Gastrocnemius medialis (tissue), 4 donors: ENCODE measurements at regions of chr15 and their contacts with region 1.

Region 1: GRCh38 chr15:85582131-85583079 is 202.0 kb downstream of the AKAP13 start:
- DNase-seq: peak; percentile 77 to 78
- ATAC-seq: peak; percentile 62 to 68
- H3K4me3 ChIP-seq: peak overlapping the region; percentile 51 to 63 (median 60)
- H3K27ac ChIP-seq: peak overlapping the region; percentile 88 to 96 (median 90)
- H3K4me1 ChIP-seq: peaks cover 58 to 71% of the 10 kb centered on the region in 2 donors
- H3K27me3 ChIP-seq: no peaks in the 10 kb centered on the region
- CTCF ChIP-seq: no peak
- POLR2A ChIP-seq: peak; percentile 88 to 89

Region 2: GRCh38 chr15:84833447-84834228 is 748.8 kb before region 1 on chr15:
- in situ Hi-C with region 1: no loop called
- intact Hi-C with region 1: loop called (anchors 10 kb)
- DNase-seq: peak in 1 of 2 donors; percentile 81
- ATAC-seq: peak; percentile 10 to 18
- H3K4me3 ChIP-seq: no peak overlapping the region
- H3K27ac ChIP-seq: peak overlapping the region; percentile 94 to 99 (median 96)
- H3K4me1 ChIP-seq: peaks cover 92 to 93% of the 10 kb centered on the region in 2 donors
- H3K27me3 ChIP-seq: no peaks in the 10 kb centered on the region
- CTCF ChIP-seq: no peak
- POLR2A ChIP-seq: peak in 1 of 2 donors; percentile 47

Region 3: GRCh38 chr15:85380217-85380811 is 202.1 kb before region 1 on chr15 and contains the start of gene AKAP13:
- in situ Hi-C with region 1: no loop called
- intact Hi-C with region 1: loop called (anchors 5 kb)
- DNase-seq: peak; percentile 96 to 98
- ATAC-seq: peak; percentile 93 to 95
- H3K4me3 ChIP-seq: peak within 1 kb of the TSS; percentile 74 to 94 (median 91)
- H3K27ac ChIP-seq: peak within 1 kb of the TSS; percentile 86 to 94 (median 92)
- H3K4me1 ChIP-seq: peaks cover 6 to 11% of the 10 kb centered on the region in 2 donors
- H3K27me3 ChIP-seq: peaks cover 0 to 2% (median 0%) of the 10 kb centered on the region in 3 donors
- CTCF ChIP-seq: no peak
- POLR2A ChIP-seq: peak; percentile 90 to 92
- total RNA-seq, gene AKAP13: 127 to 481 (median 172) TPM

Region 4: GRCh38 chr15:85707519-85708338 is 125.3 kb after region 1 on chr15:
- in situ Hi-C with region 1: loop called in 1 of 4 experiments (anchors 10 kb)
- intact Hi-C with region 1: no loop called
- DNase-seq: peak in 1 of 2 donors; percentile 56
- ATAC-seq: peak; percentile 76 to 84
- H3K4me3 ChIP-seq: peak overlapping the region; percentile 24 to 40 (median 29)
- H3K27ac ChIP-seq: peak overlapping the region; percentile 82 to 86 (median 84)
- H3K4me1 ChIP-seq: peaks cover 63% of the 10 kb centered on the region in 2 donors
- H3K27me3 ChIP-seq: no peaks in the 10 kb centered on the region
- CTCF ChIP-seq: peak in 1 of 5 experiments; percentile 9
- POLR2A ChIP-seq: peak in 1 of 2 donors; percentile 47

Region 5: DNA sequence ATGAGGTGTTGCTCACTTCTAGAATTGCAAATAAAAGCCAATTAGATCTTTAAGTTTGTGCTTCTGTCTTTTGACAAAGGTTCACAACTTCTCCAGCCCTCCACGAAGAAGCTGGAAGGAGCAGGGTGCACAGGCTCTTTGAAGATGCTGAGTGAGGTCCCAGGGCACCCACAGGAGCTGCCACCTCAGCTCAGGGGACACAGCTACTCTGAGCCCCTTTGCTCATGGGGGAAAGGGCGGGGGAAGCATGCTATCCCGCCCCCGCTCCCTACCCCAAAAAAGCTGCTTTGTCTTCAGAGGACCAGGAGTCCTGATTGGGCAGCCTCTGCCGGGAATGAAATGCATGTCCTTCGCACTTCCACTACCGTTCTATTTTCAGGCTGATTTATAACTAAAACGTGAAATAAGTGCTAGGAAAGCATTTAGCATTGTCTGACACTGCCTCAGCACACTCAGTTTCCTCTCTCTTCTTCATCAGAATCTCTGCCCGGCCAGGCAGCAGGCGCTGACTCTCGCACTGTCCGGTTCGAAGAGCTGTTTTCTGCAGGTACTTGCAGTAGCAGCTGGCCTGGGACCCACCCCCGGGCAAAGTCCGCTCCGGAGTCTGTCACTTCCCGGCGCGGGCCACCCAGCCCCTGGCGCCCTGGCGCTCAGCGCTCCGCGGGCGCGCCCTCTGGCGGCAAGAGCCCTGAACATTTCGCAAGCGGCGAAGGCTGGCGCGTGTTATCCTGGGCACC is 257.8 kb after region 1 on chr15:
- in situ Hi-C with region 1: loop called in 1 of 4 experiments (anchors 25 kb)
- intact Hi-C with region 1: no loop called
- DNase-seq: peak; percentile 61 to 84
- ATAC-seq: peak; percentile 91 to 95
- H3K4me3 ChIP-seq: peak overlapping the region; percentile 18 to 59 (median 36)
- H3K27ac ChIP-seq: no peak overlapping the region
- H3K4me1 ChIP-seq: peaks cover 0 to 4% of the 10 kb centered on the region in 2 donors
- H3K27me3 ChIP-seq: no peaks in the 10 kb centered on the region
- CTCF ChIP-seq: peak; percentile 84 to 94 (median 92)
- POLR2A ChIP-seq: no peak

Region 6: DNA sequence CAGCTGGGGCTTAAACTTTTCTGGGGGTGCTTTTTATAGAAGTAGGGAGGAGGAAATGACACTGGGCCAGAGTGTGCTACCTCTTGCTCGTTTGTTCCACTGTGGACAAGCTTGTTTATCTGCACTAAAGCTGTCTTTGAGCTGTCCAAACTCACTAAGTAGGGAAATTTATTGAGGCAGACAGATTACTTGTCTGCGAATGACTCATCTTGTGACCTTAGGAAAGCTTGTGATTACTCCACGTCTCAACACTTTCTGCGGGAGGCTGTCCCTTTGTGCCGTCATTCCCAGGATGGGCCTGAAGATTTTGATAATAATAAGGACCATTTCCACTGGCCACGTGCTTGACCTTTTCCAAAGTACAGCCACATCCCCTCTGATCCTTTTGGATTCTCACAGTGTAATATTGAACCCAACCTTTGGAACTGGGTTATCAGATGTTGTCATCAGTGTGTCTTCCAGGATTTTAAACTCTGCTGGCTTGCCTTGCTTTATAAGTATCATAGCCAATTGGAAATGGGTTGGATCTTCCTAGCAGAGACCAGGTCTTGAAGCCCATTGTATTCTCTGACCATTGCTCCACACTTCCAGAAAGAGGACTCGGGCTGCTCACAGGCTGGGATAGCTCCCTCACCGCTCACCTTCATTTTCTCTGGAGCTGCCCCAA is 582.0 kb after region 1 on chr15:
- in situ Hi-C with region 1: no loop called
- intact Hi-C with region 1: loop called (anchors 10 kb)
- DNase-seq: peak; percentile 75 to 76
- ATAC-seq: peak; percentile 72 to 81
- H3K4me3 ChIP-seq: no peak overlapping the region
- H3K27ac ChIP-seq: peak overlapping the region; percentile 85 to 98 (median 98)
- H3K4me1 ChIP-seq: peaks cover 63 to 67% of the 10 kb centered on the region in 2 donors
- H3K27me3 ChIP-seq: no peaks in the 10 kb centered on the region
- CTCF ChIP-seq: no peak
- POLR2A ChIP-seq: peak; percentile 56 to 78